ENCODE measurements at regions of chr7 and their contacts with region 1.

Region 1: GRCh38 chr7:106064771-106065585 is 47.1 kb downstream of the SYPL1 start:
- DNase-seq: peak; percentile 85 to 92
- H3K4me3 ChIP-seq: peak overlapping the region; percentile 2 to 22
- H3K27ac ChIP-seq: peak overlapping the region; percentile 74 to 75
- H3K4me1 ChIP-seq: peaks cover 0 to 10% of the 10 kb centered on the region in 2 donors
- H3K27me3 ChIP-seq: no peaks in the 10 kb centered on the region
- CTCF ChIP-seq: peak in 1 of 4 experiments; percentile 4
- POLR2A ChIP-seq: peak in 1 of 2 donors; percentile 22

Region 2: GRCh38 chr7:106112117-106112971 is 47.4 kb after region 1 on chr7 and contains the start of gene SYPL1:
- intact Hi-C with region 1: loop called (anchors 5 kb)
- DNase-seq: peak; percentile 93 to 94
- H3K4me3 ChIP-seq: peak within 1 kb of the TSS; percentile 70 to 82
- H3K27ac ChIP-seq: peak within 1 kb of the TSS; percentile 99 to 100
- H3K4me1 ChIP-seq: no peaks in the 10 kb centered on the region
- H3K27me3 ChIP-seq: no peaks in the 10 kb centered on the region
- CTCF ChIP-seq: peak in 3 of 4 experiments; percentile 19 to 32 (median 30)
- POLR2A ChIP-seq: peak; percentile 16 to 80
- total RNA-seq, gene SYPL1: 123 to 220 (median 131) TPM

Region 3: GRCh38 chr7:106153891-106154449 is 89.0 kb after region 1 on chr7:
- intact Hi-C with region 1: no loop called
- DNase-seq: peak; percentile 85 to 87
- H3K4me3 ChIP-seq: no peak overlapping the region
- H3K27ac ChIP-seq: peak overlapping the region in 1 of 2 donors; percentile 31
- H3K4me1 ChIP-seq: no peaks in the 10 kb centered on the region
- H3K27me3 ChIP-seq: no peaks in the 10 kb centered on the region
- CTCF ChIP-seq: peak; percentile 95 to 98 (median 97)
- POLR2A ChIP-seq: no peak